Activated CD4-positive, alpha-beta T cell treated with anti-CD3 and anti-CD28 coated beads, Interleukin-2, amount 10 ng/mL, durations not matched to agents 24 days and 14 days (primary cell): ENCODE measurements at regions of chr1 and their contacts with region 1.

Region 1: DNA sequence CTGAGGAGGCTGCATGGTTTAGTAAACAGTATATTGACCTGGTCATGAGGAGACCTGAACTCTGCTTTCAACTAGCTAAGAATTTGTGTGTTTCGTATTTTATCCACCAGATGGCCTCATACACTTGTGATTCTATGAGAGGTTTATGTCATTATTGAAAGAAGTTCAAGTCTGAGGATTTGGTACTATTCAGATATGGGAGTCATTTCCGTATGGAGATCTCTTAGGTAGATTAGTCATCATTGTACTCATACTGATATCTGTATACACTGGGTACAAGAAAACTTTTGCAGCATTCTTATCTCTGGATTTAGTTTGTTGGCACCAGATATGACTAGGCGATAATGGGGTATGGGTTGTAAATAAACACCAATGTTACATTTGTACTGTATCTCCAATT is 26.6 kb downstream of the ATF6 start:
- DNase-seq: peak; percentile 73
- H3K4me3 Mint-ChIP-seq: no peak overlapping the region
- H3K27ac Mint-ChIP-seq: peak overlapping the region; percentile 10
- H3K4me1 Mint-ChIP-seq: peaks cover 23% of the 10 kb centered on the region
- H3K27me3 Mint-ChIP-seq: no peaks in the 10 kb centered on the region

Region 2: DNA sequence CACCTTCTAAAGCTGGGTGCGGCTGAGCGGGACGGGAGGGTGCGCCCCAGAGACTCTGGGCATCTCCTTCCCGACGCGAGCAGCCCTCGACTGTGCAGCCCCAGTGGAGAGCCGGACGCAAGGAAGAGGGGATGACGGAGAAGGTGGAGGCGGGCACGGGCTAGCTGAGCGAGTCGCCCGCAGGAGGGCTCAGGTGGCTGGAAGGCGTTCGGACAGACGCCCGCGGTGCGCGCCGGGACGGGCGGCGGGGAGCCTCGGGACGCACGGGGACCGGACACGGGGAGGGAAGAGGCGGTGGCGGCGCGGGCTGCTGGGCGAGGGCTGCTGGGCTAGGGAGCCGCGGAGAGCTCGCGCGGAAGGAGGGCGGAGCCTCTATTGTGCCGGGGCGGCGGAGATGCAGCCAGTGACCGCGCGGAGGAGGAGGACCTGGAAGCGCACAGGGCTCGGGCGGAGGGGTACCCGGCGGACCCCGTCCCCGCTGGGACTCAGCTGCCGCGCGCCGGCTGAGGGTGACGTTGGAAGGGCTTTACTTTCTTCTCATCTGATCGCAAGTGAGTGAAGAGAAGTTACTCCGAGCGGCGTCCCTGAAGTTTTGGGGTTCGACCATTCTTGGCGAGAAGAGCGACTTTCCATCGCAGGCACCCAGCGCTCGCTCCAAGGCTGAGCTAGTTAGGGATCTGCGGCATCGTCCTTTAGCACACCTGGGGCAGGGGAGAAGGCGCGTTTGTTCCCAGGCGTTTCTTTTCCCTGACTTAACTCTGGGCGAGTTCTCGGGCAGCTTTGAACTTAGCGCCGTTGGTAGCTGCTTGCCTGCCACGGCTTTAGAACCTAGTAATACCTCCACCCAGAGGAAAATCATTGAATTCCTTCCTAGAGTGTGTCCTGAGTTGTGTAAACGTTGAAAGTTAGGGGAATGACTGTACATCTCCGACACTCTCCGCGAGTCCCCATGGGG is 231.1 kb after region 1 on chr1 and contains the start of gene OLFML2B:
- intact Hi-C with region 1: loop called (anchors 2 kb)
- DNase-seq: peak; percentile 89
- H3K4me3 Mint-ChIP-seq: peak within 1 kb of the TSS; percentile 90
- H3K27ac Mint-ChIP-seq: peak within 1 kb of the TSS; percentile 36
- H3K4me1 Mint-ChIP-seq: peaks cover 11% of the 10 kb centered on the region
- H3K27me3 Mint-ChIP-seq: peaks cover 52% of the 10 kb centered on the region
- total RNA-seq, gene OLFML2B: not detected in 2 replicates

Region 3: GRCh38 chr1:162040681-162041080 is 247.9 kb after region 1 on chr1:
- intact Hi-C with region 1: loop called (anchors 1 kb)
- DNase-seq: no peak
- H3K4me3 Mint-ChIP-seq: no peak overlapping the region
- H3K27ac Mint-ChIP-seq: no peak overlapping the region
- H3K4me1 Mint-ChIP-seq: peaks cover 2% of the 10 kb centered on the region
- H3K27me3 Mint-ChIP-seq: peaks cover 20% of the 10 kb centered on the region